ENCODE measurements at regions of chr22 and their contacts with region 1.

Region 1: DNA sequence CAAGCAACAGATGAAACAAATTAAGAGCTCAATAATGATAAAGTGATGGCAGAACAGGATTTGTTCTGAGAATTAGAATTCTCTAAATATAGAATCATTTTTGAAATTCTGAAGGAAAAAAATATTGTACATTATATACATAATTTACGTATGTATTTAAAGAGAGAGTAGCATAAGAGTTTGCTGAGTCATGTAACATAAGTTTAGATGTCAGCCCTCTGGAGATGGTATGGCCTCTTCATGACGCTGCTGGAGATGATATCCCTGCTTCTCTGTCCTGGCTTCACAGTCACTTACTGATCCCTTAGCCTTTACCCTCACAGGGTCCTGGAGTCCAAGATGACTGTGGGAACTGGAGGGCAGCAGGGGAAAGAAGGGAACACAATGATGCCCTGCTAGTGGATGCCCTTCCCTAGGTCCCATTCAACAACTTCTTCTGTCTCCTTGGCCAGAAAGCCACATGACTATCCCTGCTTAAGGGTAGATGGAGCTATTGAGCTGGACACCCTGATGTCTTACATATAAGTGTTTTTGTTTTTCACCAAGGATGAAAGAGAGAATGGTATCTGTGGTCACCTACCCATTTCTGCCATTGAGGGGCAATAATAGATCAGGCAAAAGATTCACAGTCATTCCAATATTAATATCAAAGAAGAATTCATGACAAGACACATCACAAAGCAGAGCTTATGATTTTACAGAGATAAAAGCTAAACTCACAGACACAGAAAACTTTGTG is 753.1 kb downstream of the TBC1D22A start:
- DNase-seq: no peak
- ATAC-seq: no peak
- H3K4me3 ChIP-seq: no peak overlapping the region
- H3K4me3 Mint-ChIP-seq: no peak overlapping the region
- H3K27ac ChIP-seq: no peak overlapping the region
- H3K27ac Mint-ChIP-seq: no peak overlapping the region
- H3K4me1 ChIP-seq: no peaks in the 10 kb centered on the region
- H3K4me1 Mint-ChIP-seq: no peaks in the 10 kb centered on the region
- H3K27me3 ChIP-seq: no peaks in the 10 kb centered on the region
- H3K27me3 Mint-ChIP-seq: peaks cover 5 to 10% of the 10 kb centered on the region in 2 donors

Region 2: GRCh38 chr22:47270463-47271135 is 245.0 kb before region 1 on chr22:
- CTCF ChIA-PET with region 1: interaction called in 1 of 2 experiments, 13 read pairs
- POLR2A ChIA-PET with region 1: no interaction called
- DNase-seq: no peak
- ATAC-seq: no peak
- H3K4me3 ChIP-seq: no peak overlapping the region
- H3K4me3 Mint-ChIP-seq: no peak overlapping the region
- H3K27ac ChIP-seq: no peak overlapping the region
- H3K27ac Mint-ChIP-seq: no peak overlapping the region
- H3K4me1 ChIP-seq: no peaks in the 10 kb centered on the region
- H3K4me1 Mint-ChIP-seq: no peaks in the 10 kb centered on the region
- H3K27me3 ChIP-seq: peaks cover 0 to 10% of the 10 kb centered on the region in 2 experiments
- H3K27me3 Mint-ChIP-seq: peaks cover 1 to 6% of the 10 kb centered on the region in 2 donors

Region 3: GRCh38 chr22:47497666-47498065 is 17.9 kb before region 1 on chr22:
- CTCF ChIA-PET with region 1: no interaction called
- POLR2A ChIA-PET with region 1: no interaction called
- DNase-seq: no peak
- ATAC-seq: no peak
- H3K4me3 ChIP-seq: no peak overlapping the region
- H3K4me3 Mint-ChIP-seq: no peak overlapping the region
- H3K27ac ChIP-seq: no peak overlapping the region
- H3K27ac Mint-ChIP-seq: no peak overlapping the region
- H3K4me1 ChIP-seq: peaks cover 0 to 19% of the 10 kb centered on the region in 2 experiments
- H3K4me1 Mint-ChIP-seq: peaks cover 28 to 32% (median 28%) of the 10 kb centered on the region in 3 donors
- H3K27me3 ChIP-seq: no peaks in the 10 kb centered on the region
- H3K27me3 Mint-ChIP-seq: peaks cover 0 to 7% of the 10 kb centered on the region in 2 donors